ENCODE measurements at regions of chr6 and their contacts with region 1.

Region 1: GRCh38 chr6:26064619-26065257 is 22.5 kb upstream of the HFE start:
- DNase-seq: no peak

Region 2: DNA sequence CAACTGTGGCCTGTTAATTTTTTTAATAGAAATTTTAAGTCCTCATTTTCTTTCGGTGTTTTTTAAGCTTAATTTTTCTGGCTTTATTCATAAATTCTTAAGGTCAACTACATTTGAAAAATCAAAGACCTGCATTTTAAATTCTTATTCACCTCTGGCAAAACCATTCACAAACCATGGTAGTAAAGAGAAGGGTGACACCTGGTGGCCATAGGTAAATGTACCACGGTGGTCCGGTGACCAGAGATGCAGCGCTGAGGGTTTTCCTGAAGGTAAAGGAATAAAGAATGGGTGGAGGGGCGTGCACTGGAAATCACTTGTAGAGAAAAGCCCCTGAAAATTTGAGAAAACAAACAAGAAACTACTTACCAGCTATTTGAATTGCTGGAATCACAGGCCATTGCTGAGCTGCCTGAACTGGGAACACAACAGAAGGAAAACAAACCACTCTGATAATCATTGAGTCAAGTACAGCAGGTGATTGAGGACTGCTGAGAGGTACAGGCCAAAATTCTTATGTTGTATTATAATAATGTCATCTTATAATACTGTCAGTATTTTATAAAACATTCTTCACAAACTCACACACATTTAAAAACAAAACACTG is 32.6 kb after region 1 on chr6:
- intact Hi-C with region 1: loop called (anchors 1 kb)
- DNase-seq: no peak

Region 3: GRCh38 chr6:26342106-26343004 is 277.6 kb after region 1 on chr6:
- intact Hi-C with region 1: no loop called
- DNase-seq: no peak

Measured in cardiac septum (tissue), 1 donor.